Ovary (tissue), 10 donors: ENCODE measurements at regions of chr6 and their contacts with region 1.

Region 1: GRCh38 chr6:116100419-116101301 is at the start of gene NT5DC1:
- DNase-seq: peak; percentile 78 to 85 (median 80)
- H3K4me3 ChIP-seq: peak within 1 kb of the TSS; percentile 76
- H3K27ac ChIP-seq: peak within 1 kb of the TSS; percentile 67 to 96
- H3K4me1 ChIP-seq: no peaks in the 10 kb centered on the region
- H3K27me3 ChIP-seq: no peaks in the 10 kb centered on the region
- CTCF ChIP-seq: peak; percentile 33 to 57 (median 38)
- EP300 ChIP-seq: no peak
- POLR2A ChIP-seq: peak; percentile 62
- total RNA-seq, gene NT5DC1: 5.1 to 33.9 (median 27.8) TPM

Region 2: GRCh38 chr6:115838763-115839401 is 261.8 kb before region 1 on chr6:
- intact Hi-C with region 1: no loop called
- DNase-seq: no peak
- H3K4me3 ChIP-seq: no peak overlapping the region
- H3K27ac ChIP-seq: no peak overlapping the region
- H3K4me1 ChIP-seq: no peaks in the 10 kb centered on the region
- H3K27me3 ChIP-seq: no peaks in the 10 kb centered on the region
- CTCF ChIP-seq: no peak
- EP300 ChIP-seq: no peak
- POLR2A ChIP-seq: no peak

Region 3: GRCh38 chr6:116010790-116011401 is 89.8 kb before region 1 on chr6:
- intact Hi-C with region 1: loop called in 2 of 4 experiments (anchors 2 kb)
- DNase-seq: peak; percentile 48 to 74 (median 65)
- H3K4me3 ChIP-seq: no peak overlapping the region
- H3K27ac ChIP-seq: no peak overlapping the region
- H3K4me1 ChIP-seq: peaks cover 2% of the 10 kb centered on the region
- H3K27me3 ChIP-seq: no peaks in the 10 kb centered on the region
- CTCF ChIP-seq: peak in 2 of 3 donors; percentile 55 to 57
- EP300 ChIP-seq: no peak
- POLR2A ChIP-seq: no peak